SK-N-SH (cell line): ENCODE measurements at regions of chr12 and their contacts with region 1.

Region 1: GRCh38 chr12:14769969-14770495 is 33.2 kb downstream of the WBP11 start:
- DNase-seq: peak; percentile 83
- H3K4me3 ChIP-seq: peak overlapping the region; percentile 73 to 93
- H3K27ac ChIP-seq: peak overlapping the region; percentile 81 to 96
- H3K4me1 ChIP-seq: peaks cover 11 to 12% of the 10 kb centered on the region in 2 experiments; a peak in 3 of 4 replicates
- H3K27me3 ChIP-seq: no peaks in the 10 kb centered on the region
- CTCF ChIP-seq: peak; percentile 74
- EP300 ChIP-seq: no peak
- RAD21 ChIP-seq: no peak

Region 2: GRCh38 chr12:14782756-14783155 is 12.7 kb after region 1 on chr12:
- CTCF ChIA-PET with region 1: interaction called, 16 read pairs
- POLR2A ChIA-PET with region 1: no interaction called
- DNase-seq: no peak
- H3K4me3 ChIP-seq: no peak overlapping the region
- H3K27ac ChIP-seq: no peak overlapping the region
- H3K4me1 ChIP-seq: no peaks in the 10 kb centered on the region; a peak in 1 of 4 replicates
- H3K27me3 ChIP-seq: no peaks in the 10 kb centered on the region
- CTCF ChIP-seq: no peak
- EP300 ChIP-seq: no peak
- RAD21 ChIP-seq: no peak

Region 3: DNA sequence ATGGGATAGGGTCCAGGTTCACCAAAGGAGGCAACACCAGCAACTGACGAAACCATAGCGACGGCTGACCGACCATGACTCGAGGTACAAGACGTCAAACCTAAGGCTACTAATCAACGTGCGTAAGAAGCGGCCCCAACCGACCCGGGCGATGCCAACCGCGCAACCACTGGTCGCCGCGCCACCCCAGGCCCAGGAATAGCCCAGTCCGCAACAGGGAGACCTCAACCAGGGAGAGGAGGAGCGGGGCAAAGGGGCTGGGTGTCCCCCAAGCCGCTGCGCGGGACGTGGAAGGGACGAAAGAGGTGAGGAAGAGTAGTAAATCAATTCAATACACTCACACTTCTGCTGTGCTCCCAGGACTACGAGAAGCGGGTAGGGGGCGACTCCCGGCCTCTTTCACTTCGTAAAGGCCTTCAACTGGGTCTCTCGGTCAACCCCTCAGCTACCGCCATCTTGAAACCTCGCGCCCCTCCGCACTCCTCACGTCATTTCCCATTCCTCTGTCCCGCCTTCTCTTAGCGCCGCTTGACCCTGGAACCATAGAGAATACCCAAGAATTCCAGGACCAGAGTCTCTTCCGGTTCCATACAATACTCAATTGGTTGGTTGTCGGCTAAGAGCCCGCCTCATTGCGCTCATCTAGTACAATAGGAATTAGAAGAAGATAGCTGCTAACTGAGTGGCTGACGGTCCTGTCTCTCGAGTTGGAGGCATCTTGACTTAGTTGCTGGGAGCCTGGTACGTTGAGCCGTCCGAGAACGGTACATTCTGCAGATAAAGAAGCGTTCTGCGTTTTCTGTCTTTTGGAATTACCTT is 33.2 kb after region 1 on chr12 and contains the starts of genes C12orf60 and WBP11:
- CTCF ChIA-PET with region 1: interaction called, 18 read pairs
- POLR2A ChIA-PET with region 1: interaction called, 30 read pairs
- DNase-seq: peak; percentile 89
- H3K4me3 ChIP-seq: peak within 1 kb of the TSS; percentile 63 to 87
- H3K27ac ChIP-seq: peak within 1 kb of the TSS; percentile 81 to 97
- H3K4me1 ChIP-seq: peaks cover 2 to 4% of the 10 kb centered on the region in 2 experiments; a peak in 3 of 4 replicates
- H3K27me3 ChIP-seq: no peaks in the 10 kb centered on the region
- CTCF ChIP-seq: no peak
- EP300 ChIP-seq: peak in 1 of 2 experiments; percentile 19; a peak in 1 of 4 replicates
- RAD21 ChIP-seq: no peak
- polyA plus RNA-seq, gene C12orf60: 0.87 and 1.0 TPM in 2 replicates
- polyA plus RNA-seq, gene WBP11: 14.7 and 18.7 TPM in 2 replicates

Region 4: GRCh38 chr12:16056910-16057309 is 1286.9 kb after region 1 on chr12:
- CTCF ChIA-PET with region 1: no interaction called
- POLR2A ChIA-PET with region 1: no interaction called
- DNase-seq: no peak
- H3K4me3 ChIP-seq: no peak overlapping the region
- H3K27ac ChIP-seq: no peak overlapping the region
- H3K4me1 ChIP-seq: no peaks in the 10 kb centered on the region
- H3K27me3 ChIP-seq: no peaks in the 10 kb centered on the region
- CTCF ChIP-seq: no peak
- EP300 ChIP-seq: no peak
- RAD21 ChIP-seq: no peak